AG04449 (cell line): ENCODE measurements at regions of chr12 and their contacts with region 1.

Region 1: DNA sequence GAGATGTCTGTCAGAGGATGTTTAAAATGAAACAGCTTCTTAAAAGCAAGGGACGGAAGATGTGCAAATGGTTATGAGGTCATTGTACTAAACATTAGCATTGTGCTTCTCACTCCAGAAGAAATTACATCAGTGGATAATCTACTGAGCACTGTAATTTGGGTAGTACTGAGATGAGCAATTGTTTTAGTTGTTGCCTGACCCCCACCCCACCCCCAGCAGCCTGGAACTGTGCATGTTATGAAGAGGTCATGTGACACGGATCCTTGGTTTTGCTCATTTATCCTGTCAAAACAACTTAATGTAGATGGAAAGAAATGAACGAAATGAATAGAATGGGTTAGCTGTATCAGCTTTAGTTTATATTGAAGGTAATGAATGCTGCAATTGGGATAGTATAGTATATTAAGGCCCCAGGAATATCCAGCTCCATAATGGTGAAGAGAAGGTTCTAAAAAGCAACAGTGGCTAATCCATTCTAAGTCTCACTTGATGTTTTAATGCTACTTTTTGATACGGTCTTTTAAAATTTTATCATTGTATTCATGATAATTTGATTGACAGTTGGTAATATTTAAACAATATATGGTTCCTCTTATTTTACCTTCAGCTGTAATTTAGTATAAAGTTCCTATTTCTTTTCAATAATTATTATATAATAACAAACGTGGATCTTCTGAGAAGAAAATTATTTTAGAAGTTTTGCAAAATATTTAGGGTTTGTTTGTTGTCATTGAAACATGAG is 58.5 kb downstream of the WNK1 start:
- DNase-seq: no peak
- H3K4me3 ChIP-seq: no peak overlapping the region
- CTCF ChIP-seq: no peak

Region 2: GRCh38 chr12:563250-563781 is 247.5 kb before region 1 on chr12:
- CTCF ChIA-PET with region 1: interaction called, 290 read pairs
- POLR2A ChIA-PET with region 1: no interaction called
- DNase-seq: no peak
- H3K4me3 ChIP-seq: no peak overlapping the region
- CTCF ChIP-seq: no peak

Region 3: DNA sequence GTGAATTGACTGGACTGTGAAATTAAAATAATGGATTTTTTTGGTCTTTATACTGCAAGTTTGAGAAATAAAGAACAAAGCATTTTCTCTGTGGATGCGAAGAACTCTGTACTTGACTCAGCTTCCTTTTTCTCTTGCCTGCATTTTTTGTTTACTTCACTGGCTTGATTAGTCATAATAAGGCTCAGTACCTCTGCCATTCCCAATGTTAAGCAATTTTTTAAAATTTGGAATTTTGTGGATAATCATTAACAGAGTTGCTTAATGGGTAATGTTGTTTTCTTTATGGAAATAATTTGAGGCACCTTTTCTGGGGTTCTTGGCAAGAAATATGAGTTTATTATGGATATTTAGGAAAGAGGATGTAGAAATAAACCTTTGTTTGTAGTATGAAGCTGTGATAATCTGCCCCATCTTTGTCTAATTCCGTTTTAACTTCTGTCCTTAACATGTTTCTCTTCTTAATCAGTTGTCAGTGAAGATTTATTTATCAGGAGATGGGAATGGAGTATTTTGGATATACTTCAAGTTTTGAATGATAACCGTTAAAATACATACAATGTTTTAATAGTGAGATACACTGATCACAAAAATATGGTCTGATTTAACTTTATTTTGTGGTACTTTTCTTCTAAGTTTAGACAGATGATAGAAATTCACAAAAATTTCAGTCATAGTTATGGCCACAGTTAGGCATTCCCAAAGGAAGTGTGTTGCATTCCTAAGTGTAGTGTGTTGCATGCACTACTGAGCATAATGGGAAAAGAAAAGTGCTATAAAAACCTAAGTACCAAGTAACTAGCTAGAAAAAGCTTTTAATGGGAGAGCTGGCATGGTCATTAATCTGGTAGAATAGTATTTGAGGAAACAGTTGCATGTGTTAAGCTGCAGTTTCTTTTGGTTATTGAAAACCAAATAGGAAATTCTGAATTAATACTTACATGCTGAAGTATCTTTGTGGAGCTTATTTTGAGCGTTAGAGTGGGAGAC is 30.8 kb before region 1 on chr12:
- CTCF ChIA-PET with region 1: interaction called, 22 read pairs
- POLR2A ChIA-PET with region 1: no interaction called
- DNase-seq: peak; percentile 66
- H3K4me3 ChIP-seq: 0 out of 2 replicates have a peak overlapping the region, but pooled peaks have one; percentile 12
- CTCF ChIP-seq: no peak

Region 4: DNA sequence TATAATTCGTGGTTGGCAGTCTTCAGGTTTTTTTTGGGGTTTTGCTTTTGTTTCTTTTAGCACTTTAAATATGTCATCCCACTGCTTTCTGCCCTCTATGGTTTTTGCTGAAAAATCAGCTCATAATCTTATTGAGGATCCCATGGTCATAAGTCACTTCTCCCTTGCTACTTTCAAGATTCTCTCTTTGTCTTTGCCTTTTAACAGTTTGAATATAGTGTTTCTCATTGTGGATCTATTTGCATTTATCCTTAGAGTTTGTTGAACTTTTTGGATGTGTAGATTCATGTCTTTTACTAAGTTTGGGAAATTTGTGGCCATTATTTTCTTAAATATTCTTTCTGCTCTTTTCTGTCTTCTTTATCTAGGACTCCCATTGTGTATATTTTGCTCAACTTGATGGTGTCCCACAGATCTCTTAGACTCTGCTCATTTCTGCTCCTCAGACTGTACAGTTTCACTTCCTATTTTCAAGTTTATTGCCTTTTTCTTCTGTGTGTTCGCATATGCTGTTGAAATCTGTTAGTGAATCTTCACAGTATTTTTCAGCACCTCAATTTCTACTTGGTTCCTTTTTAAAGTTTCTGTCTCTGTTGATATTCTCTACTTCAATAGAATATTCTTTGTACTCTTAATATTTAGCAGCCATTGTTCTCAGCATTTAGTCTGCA is 12.3 kb after region 1 on chr12:
- CTCF ChIA-PET with region 1: interaction called, 130 read pairs
- POLR2A ChIA-PET with region 1: no interaction called
- DNase-seq: no peak
- H3K4me3 ChIP-seq: no peak overlapping the region
- CTCF ChIP-seq: no peak

Region 5: GRCh38 chr12:857611-858010 is 46.8 kb after region 1 on chr12:
- CTCF ChIA-PET with region 1: interaction called, 53 read pairs
- POLR2A ChIA-PET with region 1: no interaction called
- DNase-seq: peak; percentile 34
- H3K4me3 ChIP-seq: no peak overlapping the region
- CTCF ChIP-seq: no peak